HEK293T (cell line): ENCODE measurements at regions of chr11 and their contacts with region 1.

Region 1: GRCh38 chr11:62905927-62906531 is 15.1 kb downstream of the CHRM1 start:
- DNase-seq: peak; percentile 87

Region 2: DNA sequence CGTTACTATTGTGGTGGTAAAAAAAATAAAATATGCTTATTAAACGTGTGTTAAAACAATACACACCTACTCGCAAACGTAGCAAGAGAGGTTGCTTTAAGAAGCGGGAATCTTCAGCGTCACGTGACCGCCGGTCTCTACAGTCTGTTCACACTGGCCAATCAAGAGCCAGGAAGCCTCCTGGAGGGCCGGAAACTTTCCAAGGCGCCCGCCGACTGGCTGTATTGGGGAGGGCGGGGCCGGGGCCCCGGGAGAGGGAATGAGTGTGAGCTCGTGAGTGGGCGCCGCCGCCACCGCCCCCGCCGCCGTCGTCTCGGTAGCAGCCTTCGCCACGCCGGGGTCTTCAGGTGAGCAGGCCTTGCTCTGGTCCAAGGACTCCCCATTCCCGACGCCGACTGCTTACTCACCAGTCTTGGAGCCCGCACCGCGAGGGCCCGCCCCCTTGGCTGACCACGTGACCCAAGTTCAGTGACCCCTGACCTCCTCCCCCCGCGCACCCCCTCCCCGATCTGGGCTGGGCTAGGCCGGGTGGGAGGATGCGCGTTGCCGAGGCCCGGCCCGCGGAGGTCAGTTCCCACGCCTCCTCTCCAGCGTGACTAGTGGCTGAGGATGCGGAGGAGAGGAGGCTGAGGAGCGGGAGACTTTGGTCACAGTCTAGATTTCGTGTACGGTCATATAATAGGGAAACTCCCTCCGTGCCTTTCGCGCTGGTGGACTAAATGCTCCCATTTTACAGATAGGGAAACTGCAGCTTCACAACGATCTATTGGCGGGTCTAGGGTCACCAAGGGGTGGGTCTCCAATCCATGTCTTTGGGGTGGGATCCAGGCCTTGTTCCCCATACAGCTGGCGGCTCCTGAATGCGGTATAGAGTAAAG is 134.6 kb before region 1 on chr11 and contains the start of gene TAF6L:
- CTCF ChIA-PET with region 1: no interaction called
- POLR2A ChIA-PET with region 1: no interaction called
- DNase-seq: peak; percentile 92

Region 3: DNA sequence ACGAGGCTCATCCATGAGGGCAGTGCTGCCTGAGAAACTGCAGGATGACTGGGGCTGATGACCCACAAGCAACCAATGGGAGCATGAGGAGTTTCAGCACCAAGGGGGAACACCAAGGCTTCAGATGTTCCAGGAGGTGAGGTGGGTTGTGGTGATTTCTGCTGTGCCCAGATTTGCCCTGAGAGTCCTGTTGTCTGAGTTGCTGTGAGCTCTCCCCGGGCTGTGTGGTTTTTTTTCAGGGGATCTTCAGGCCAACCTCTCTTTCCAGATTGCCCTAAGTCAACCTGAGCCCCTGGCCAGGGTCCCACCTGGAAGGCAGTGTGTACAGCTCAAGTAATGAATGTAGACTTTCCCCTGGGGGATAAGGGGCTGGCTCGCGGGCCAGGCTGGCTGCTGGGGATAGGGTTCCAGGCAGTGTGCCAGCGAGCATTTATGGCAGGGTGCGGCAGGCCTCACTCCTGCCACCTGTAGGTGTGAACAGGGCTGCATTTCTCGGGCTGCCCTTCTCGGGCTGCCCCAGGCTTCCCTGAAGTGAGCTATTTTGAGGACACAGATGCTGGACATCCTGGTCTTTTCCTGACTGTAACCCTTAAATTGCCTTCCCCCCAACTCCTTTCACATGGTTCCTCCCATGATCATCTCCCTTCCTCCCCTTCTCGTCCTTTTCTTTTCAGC is 69.0 kb after region 1 on chr11:
- CTCF ChIA-PET with region 1: interaction called, 25 read pairs
- POLR2A ChIA-PET with region 1: no interaction called
- DNase-seq: peak; percentile 77